ENCODE measurements at regions of chr5 and their contacts with region 1.

Region 1: GRCh38 chr5:29750385-29750784 is 1443.1 kb upstream of the CDH6 start:
- DNase-seq: no peak
- ATAC-seq: peak; percentile 88
- H3K4me3 ChIP-seq: no peak overlapping the region
- H3K27ac ChIP-seq: no peak overlapping the region
- H3K4me1 ChIP-seq: no peaks in the 10 kb centered on the region
- H3K27me3 ChIP-seq: no peaks in the 10 kb centered on the region
- CTCF ChIP-seq: no peak

Region 2: DNA sequence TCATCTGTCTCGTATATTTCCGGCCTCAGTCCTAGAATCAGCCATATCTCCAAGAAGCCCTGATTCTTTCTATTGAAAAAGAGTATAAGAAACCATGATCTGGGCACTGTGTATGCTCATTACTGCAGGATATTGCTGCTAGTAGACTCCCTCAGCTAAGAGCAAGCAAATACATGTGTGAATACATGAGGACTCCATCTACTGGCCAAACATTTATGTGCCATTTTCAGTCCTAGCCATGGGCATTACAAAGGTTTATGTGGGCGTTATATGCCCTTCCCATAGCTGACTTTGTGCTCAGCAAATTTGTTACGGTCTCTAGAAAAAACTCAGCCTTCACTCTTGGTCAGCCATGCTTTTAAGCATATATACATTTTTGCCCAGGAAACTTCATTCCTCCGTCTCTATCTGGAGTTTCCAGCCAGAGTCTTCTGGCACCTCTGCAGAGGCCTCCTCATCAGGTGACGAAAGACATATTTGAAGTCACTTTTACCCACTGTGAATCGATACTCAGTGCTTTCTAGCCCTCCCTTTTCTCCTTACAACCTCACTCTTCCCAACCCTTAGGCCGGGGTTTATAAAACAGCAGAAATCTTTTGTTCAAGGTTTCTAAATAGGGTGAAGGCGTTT is 52.5 kb before region 1 on chr5:
- CTCF ChIA-PET with region 1: no interaction called
- POLR2A ChIA-PET with region 1: no interaction called
- intact Hi-C with region 1: loop called (anchors 2 kb)
- DNase-seq: peak; percentile 48
- ATAC-seq: peak; percentile 45
- H3K4me3 ChIP-seq: no peak overlapping the region
- H3K27ac ChIP-seq: no peak overlapping the region
- H3K4me1 ChIP-seq: 0 out of 2 replicates have a peak, but pooled peaks cover 2% of the 10 kb centered on the region
- H3K27me3 ChIP-seq: no peaks in the 10 kb centered on the region
- CTCF ChIP-seq: peak; percentile 73

Region 3: DNA sequence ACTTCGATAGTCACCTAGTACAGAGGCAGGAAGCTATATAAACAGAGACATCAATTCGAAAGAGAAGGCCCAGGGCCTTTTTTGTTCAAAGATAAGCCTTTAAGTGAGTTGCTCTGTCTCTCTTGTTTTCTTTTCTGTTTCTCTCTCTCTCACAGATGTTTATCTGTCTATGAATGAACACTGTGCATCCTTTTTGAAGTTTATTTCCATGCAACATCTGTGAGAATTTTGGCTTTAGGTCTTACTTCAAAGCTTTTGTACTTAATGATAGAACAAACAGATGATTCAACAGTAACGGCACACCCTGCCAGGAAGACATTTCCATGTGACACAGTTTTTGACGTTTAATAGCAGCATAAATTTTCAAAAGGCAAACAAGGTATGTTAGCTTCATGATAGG is 30.0 kb after region 1 on chr5:
- CTCF ChIA-PET with region 1: no interaction called
- POLR2A ChIA-PET with region 1: no interaction called
- intact Hi-C with region 1: loop called (anchors 2 kb)
- DNase-seq: peak; percentile 63
- ATAC-seq: peak; percentile 91
- H3K4me3 ChIP-seq: no peak overlapping the region
- H3K27ac ChIP-seq: peak overlapping the region; percentile 34; the same call in 1 of the 2 replicates
- H3K4me1 ChIP-seq: peaks cover 5% of the 10 kb centered on the region; the same call in 1 of the 2 replicates
- H3K27me3 ChIP-seq: no peaks in the 10 kb centered on the region
- CTCF ChIP-seq: no peak

Region 4: GRCh38 chr5:30030110-30030509 is 279.7 kb after region 1 on chr5:
- CTCF ChIA-PET with region 1: no interaction called
- POLR2A ChIA-PET with region 1: no interaction called
- intact Hi-C with region 1: loop called (anchors 2 kb)
- DNase-seq: peak; percentile 42
- ATAC-seq: peak; percentile 96
- H3K4me3 ChIP-seq: no peak overlapping the region
- H3K27ac ChIP-seq: no peak overlapping the region
- H3K4me1 ChIP-seq: peaks cover 11% of the 10 kb centered on the region
- H3K27me3 ChIP-seq: no peaks in the 10 kb centered on the region
- CTCF ChIP-seq: no peak

Measured in PC-3 (cell line).